B cell (primary cell): ENCODE measurements at regions of chr1 and their contacts with region 1.

Region 1: DNA sequence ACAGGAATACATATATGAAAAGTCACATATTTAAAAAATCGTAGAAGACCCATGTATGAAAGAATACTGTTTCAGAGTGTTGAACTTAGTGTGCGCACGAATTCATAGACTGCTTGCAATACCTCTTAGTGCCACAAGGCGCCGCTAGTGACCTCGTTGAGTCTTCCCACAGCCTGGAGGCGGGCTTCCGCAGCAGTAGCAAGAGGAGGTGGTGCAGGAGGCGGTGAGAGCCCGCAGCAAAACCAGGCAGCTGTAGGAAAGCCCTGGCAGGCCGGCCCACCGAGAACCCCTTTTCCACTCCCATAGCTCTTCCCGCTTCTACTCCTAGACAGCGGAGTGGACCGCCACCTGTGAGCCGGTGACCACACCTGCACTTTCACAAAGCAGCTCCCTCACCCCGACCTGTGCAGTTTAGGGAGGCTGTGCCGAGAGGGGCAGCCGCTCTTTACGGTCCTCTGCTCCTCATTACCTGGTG is 23.5 kb downstream of the MTARC1 start:
- DNase-seq: peak; percentile 83
- ATAC-seq: peak; percentile 98
- H3K4me3 ChIP-seq: peak overlapping the region in 1 of 5 experiments; percentile 13
- H3K4me3 Mint-ChIP-seq: peak overlapping the region; percentile 70
- H3K27ac ChIP-seq: no peak overlapping the region
- H3K27ac Mint-ChIP-seq: no peak overlapping the region
- H3K4me1 ChIP-seq: peaks cover 0 to 5% of the 10 kb centered on the region in 2 donors
- H3K4me1 Mint-ChIP-seq: peaks cover 6% of the 10 kb centered on the region
- H3K27me3 ChIP-seq: peaks cover 0 to 9% (median 2%) of the 10 kb centered on the region in 4 experiments
- H3K27me3 Mint-ChIP-seq: peaks cover 7% of the 10 kb centered on the region
- CTCF ChIP-seq: peak; percentile 99

Region 2: GRCh38 chr1:221263831-221264767 is 453.9 kb after region 1 on chr1:
- CTCF ChIA-PET with region 1: interaction called, 3 read pairs
- POLR2A ChIA-PET with region 1: no interaction called
- intact Hi-C with region 1: loop called (anchors 5 kb)
- DNase-seq: peak; percentile 63
- ATAC-seq: peak; percentile 58
- H3K4me3 ChIP-seq: no peak overlapping the region
- H3K4me3 Mint-ChIP-seq: no peak overlapping the region
- H3K27ac ChIP-seq: no peak overlapping the region
- H3K27ac Mint-ChIP-seq: no peak overlapping the region
- H3K4me1 ChIP-seq: no peaks in the 10 kb centered on the region
- H3K4me1 Mint-ChIP-seq: no peaks in the 10 kb centered on the region
- H3K27me3 ChIP-seq: peaks cover 0 to 3% (median 0%) of the 10 kb centered on the region in 4 experiments
- H3K27me3 Mint-ChIP-seq: peaks cover 28% of the 10 kb centered on the region
- CTCF ChIP-seq: peak; percentile 67

Region 3: DNA sequence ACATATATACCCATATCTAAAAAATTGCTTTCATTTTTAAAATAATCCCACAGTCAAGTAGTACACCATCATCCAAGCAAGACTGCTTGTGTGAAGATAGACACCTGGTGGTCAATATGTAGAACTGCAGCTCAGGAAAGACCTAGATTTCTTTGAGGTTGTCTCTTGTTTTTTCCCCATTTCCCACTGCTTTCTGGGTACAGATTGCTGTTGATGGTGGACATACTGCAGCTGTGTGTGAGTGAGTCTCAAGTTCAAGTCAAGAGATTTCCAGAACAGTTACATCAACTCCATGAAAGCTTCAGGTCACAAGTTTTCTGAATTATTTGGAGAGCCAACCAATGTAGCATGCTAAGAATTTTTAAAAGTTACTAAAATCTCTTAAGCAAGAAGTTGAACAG is 625.3 kb after region 1 on chr1:
- CTCF ChIA-PET with region 1: interaction called, 45 read pairs
- POLR2A ChIA-PET with region 1: no interaction called
- intact Hi-C with region 1: no loop called
- DNase-seq: peak; percentile 62
- ATAC-seq: peak; percentile 56
- H3K4me3 ChIP-seq: no peak overlapping the region
- H3K4me3 Mint-ChIP-seq: no peak overlapping the region
- H3K27ac ChIP-seq: no peak overlapping the region
- H3K27ac Mint-ChIP-seq: no peak overlapping the region
- H3K4me1 ChIP-seq: peaks cover 10 to 11% of the 10 kb centered on the region in 2 donors
- H3K4me1 Mint-ChIP-seq: peaks cover 18% of the 10 kb centered on the region
- H3K27me3 ChIP-seq: no peaks in the 10 kb centered on the region
- H3K27me3 Mint-ChIP-seq: peaks cover 9% of the 10 kb centered on the region
- CTCF ChIP-seq: peak; percentile 96